Activated naive CD4-positive, alpha-beta T cell treated with anti-CD3 and anti-CD28 coated beads for 36 hours (primary cell): ENCODE measurements at regions of chr22 and their contacts with region 1.

Region 1: GRCh38 chr22:24433813-24434470 is 6.5 kb downstream of the ADORA2A start:
- DNase-seq: peak; percentile 84
- H3K4me3 Mint-ChIP-seq: peak overlapping the region; percentile 58
- H3K27ac Mint-ChIP-seq: peak overlapping the region; percentile 99
- H3K4me1 Mint-ChIP-seq: peaks cover 92% of the 10 kb centered on the region
- H3K27me3 Mint-ChIP-seq: no peaks in the 10 kb centered on the region

Region 2: DNA sequence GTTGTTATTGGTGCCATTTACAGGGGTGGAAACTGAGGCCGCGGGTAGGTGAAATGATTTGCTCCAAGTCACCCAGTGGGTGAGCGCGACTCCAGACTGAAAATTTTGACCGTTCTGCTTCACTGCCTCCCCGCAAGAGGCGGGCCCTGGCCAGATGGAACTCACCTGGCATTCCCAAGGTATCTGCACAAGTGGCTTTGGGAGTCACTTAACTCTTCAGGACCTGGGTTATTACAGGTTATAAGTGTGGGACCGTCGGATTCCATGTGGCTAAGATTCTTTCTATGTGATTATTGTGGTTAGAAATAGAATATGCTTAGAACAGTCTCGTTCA is 422.2 kb before region 1 on chr22:
- CTCF ChIA-PET with region 1: no interaction called
- intact Hi-C with region 1: loop called (anchors 2 kb)
- DNase-seq: no peak
- H3K4me3 Mint-ChIP-seq: peak overlapping the region; percentile 95
- H3K27ac Mint-ChIP-seq: peak overlapping the region; percentile 89
- H3K4me1 Mint-ChIP-seq: peaks cover 25% of the 10 kb centered on the region
- H3K27me3 Mint-ChIP-seq: no peaks in the 10 kb centered on the region

Region 3: GRCh38 chr22:24284747-24285203 is 149.2 kb before region 1 on chr22:
- CTCF ChIA-PET with region 1: no interaction called
- intact Hi-C with region 1: loop called (anchors 1 kb)
- DNase-seq: peak; percentile 41
- H3K4me3 Mint-ChIP-seq: peak overlapping the region; percentile 0
- H3K27ac Mint-ChIP-seq: peak overlapping the region; percentile 79
- H3K4me1 Mint-ChIP-seq: peaks cover 51% of the 10 kb centered on the region
- H3K27me3 Mint-ChIP-seq: no peaks in the 10 kb centered on the region

Region 4: DNA sequence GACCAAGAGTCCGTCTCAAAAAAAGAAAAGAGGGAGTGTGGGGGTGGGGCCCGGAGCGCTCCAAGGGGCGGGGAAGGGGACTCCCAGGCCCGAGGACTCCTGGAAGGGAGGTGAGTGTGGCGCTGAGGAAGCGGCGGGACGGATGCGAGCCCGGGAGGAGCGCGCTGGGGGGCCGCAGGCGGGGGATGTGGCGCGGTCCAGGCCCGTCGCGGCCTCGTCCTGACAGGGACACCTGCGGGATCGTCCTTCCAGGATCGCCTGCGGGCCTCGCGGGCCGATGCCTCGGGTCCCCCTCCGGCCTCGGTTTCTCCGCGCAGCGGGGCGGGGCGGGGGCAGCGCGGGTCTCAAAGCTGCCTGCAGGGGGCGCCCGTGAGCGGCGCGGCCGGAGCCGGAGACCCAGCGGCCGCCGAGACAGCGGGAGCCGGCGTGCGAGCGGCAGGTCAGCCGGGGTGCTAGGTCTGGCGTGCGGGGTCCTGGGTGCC is 10.4 kb before region 1 on chr22:
- CTCF ChIA-PET with region 1: interaction called, 14 read pairs
- intact Hi-C with region 1: loop called (anchors 1 kb)
- DNase-seq: peak; percentile 58
- H3K4me3 Mint-ChIP-seq: peak overlapping the region; percentile 69
- H3K27ac Mint-ChIP-seq: no peak overlapping the region
- H3K4me1 Mint-ChIP-seq: peaks cover 25% of the 10 kb centered on the region
- H3K27me3 Mint-ChIP-seq: no peaks in the 10 kb centered on the region

Region 5: GRCh38 chr22:24486501-24486921 is 52.6 kb after region 1 on chr22:
- CTCF ChIA-PET with region 1: no interaction called
- intact Hi-C with region 1: loop called (anchors 1 kb)
- DNase-seq: peak; percentile 49
- H3K4me3 Mint-ChIP-seq: no peak overlapping the region
- H3K27ac Mint-ChIP-seq: no peak overlapping the region
- H3K4me1 Mint-ChIP-seq: peaks cover 20% of the 10 kb centered on the region
- H3K27me3 Mint-ChIP-seq: no peaks in the 10 kb centered on the region

Region 6: GRCh38 chr22:24525416-24526037 is 91.6 kb after region 1 on chr22:
- CTCF ChIA-PET with region 1: interaction called, 10 read pairs
- intact Hi-C with region 1: no loop called
- DNase-seq: peak; percentile 92
- H3K4me3 Mint-ChIP-seq: no peak overlapping the region
- H3K27ac Mint-ChIP-seq: no peak overlapping the region
- H3K4me1 Mint-ChIP-seq: peaks cover 10% of the 10 kb centered on the region
- H3K27me3 Mint-ChIP-seq: no peaks in the 10 kb centered on the region

Region 7: GRCh38 chr22:25067851-25068421 is 634.0 kb after region 1 on chr22:
- CTCF ChIA-PET with region 1: no interaction called
- intact Hi-C with region 1: loop called (anchors 5 kb)
- DNase-seq: peak; percentile 91
- H3K4me3 Mint-ChIP-seq: peak overlapping the region; percentile 79
- H3K27ac Mint-ChIP-seq: peak overlapping the region; percentile 90
- H3K4me1 Mint-ChIP-seq: peaks cover 85% of the 10 kb centered on the region
- H3K27me3 Mint-ChIP-seq: no peaks in the 10 kb centered on the region